K562 (cell line): ENCODE measurements at regions of chr5 and their contacts with region 1.

Region 1: GRCh38 chr5:78137290-78137689 is 157.2 kb downstream of the AP3B1 start:
- DNase-seq: no peak
- ATAC-seq: no peak
- H3K4me3 ChIP-seq: no peak overlapping the region
- H3K27ac ChIP-seq: no peak overlapping the region
- H3K4me1 ChIP-seq: no peaks in the 10 kb centered on the region
- H3K27me3 ChIP-seq: no peaks in the 10 kb centered on the region
- CTCF ChIP-seq: no peak
- EP300 ChIP-seq: no peak
- POLR2A ChIP-seq: no peak
- RAD21 ChIP-seq: no peak

Region 2: DNA sequence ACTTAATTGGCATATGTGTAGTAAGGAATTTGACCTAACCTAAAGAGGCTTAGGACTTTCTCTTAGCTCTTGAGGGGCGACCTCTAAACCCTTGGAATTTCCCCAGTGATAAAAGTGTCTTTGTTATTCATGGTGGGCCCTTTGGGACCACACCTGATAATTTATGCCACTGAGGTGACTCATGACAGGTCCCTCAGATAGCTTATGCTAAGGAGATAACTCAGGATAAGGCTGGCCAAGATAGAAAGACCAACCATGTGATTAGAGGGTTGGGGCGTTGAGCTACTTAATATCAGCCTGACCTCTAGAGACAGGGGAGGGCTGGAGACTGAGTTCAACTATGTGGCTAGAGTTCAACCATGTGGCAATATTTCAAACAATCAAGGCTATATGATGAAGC is 60.9 kb before region 1 on chr5:
- CTCF ChIA-PET with region 1: no interaction called
- POLR2A ChIA-PET with region 1: no interaction called
- in situ Hi-C with region 1: loop called (anchors 5 kb)
- intact Hi-C with region 1: no loop called
- DNase-seq: peak in 2 of 4 experiments; percentile 7 to 8
- ATAC-seq: peak; percentile 52
- H3K4me3 ChIP-seq: no peak overlapping the region
- H3K27ac ChIP-seq: no peak overlapping the region
- H3K4me1 ChIP-seq: no peaks in the 10 kb centered on the region; a peak in 1 of 5 replicates
- H3K27me3 ChIP-seq: no peaks in the 10 kb centered on the region
- CTCF ChIP-seq: no peak
- EP300 ChIP-seq: no peak
- POLR2A ChIP-seq: no peak
- RAD21 ChIP-seq: no peak

Region 3: GRCh38 chr5:78178356-78178755 is 41.1 kb after region 1 on chr5:
- CTCF ChIA-PET with region 1: no interaction called
- POLR2A ChIA-PET with region 1: no interaction called
- in situ Hi-C with region 1: no loop called
- intact Hi-C with region 1: no loop called
- DNase-seq: no peak
- ATAC-seq: no peak
- H3K4me3 ChIP-seq: no peak overlapping the region
- H3K27ac ChIP-seq: no peak overlapping the region
- H3K4me1 ChIP-seq: peaks cover 0 to 3% of the 10 kb centered on the region in 2 experiments; a peak in 1 of 5 replicates
- H3K27me3 ChIP-seq: no peaks in the 10 kb centered on the region
- CTCF ChIP-seq: no peak
- EP300 ChIP-seq: no peak
- POLR2A ChIP-seq: no peak
- RAD21 ChIP-seq: no peak